RWPE1 (cell line): ENCODE measurements at regions of chr6 and their contacts with region 1.

Region 1: GRCh38 chr6:106085984-106086813 is at the start of gene PRDM1:
- DNase-seq: peak; percentile 85
- H3K27ac ChIP-seq: peak within 1 kb of the TSS; percentile 51
- CTCF ChIP-seq: peak; percentile 54; the same call in 1 of the 2 replicates

Region 2: GRCh38 chr6:104813552-104813951 is 1272.6 kb before region 1 on chr6:
- CTCF ChIA-PET with region 1: no interaction called
- POLR2A ChIA-PET with region 1: no interaction called
- DNase-seq: no peak
- H3K27ac ChIP-seq: no peak overlapping the region
- CTCF ChIP-seq: no peak

Region 3: DNA sequence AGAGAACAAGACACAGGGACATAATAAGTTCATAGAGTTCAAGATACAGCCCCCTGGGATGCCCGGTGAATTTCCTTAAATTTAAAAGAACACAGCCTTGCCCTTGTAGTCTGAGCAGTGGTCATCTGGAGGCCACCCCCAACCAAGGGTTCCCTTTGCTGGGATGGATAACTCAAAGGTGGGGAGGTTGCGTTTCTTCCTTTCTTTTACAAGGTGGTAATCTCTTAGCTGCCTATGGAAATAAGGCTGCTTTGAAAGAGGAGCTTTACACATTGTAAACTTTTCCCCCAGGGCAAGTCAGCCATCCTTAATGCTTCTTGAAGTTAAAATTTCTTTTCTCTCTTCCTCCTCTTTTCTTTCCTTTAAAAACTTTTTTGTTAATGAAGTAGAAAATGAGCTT is 71.3 kb before region 1 on chr6:
- CTCF ChIA-PET with region 1: no interaction called
- POLR2A ChIA-PET with region 1: interaction called, 10 read pairs
- DNase-seq: no peak
- H3K27ac ChIP-seq: no peak overlapping the region
- CTCF ChIP-seq: no peak

Region 4: DNA sequence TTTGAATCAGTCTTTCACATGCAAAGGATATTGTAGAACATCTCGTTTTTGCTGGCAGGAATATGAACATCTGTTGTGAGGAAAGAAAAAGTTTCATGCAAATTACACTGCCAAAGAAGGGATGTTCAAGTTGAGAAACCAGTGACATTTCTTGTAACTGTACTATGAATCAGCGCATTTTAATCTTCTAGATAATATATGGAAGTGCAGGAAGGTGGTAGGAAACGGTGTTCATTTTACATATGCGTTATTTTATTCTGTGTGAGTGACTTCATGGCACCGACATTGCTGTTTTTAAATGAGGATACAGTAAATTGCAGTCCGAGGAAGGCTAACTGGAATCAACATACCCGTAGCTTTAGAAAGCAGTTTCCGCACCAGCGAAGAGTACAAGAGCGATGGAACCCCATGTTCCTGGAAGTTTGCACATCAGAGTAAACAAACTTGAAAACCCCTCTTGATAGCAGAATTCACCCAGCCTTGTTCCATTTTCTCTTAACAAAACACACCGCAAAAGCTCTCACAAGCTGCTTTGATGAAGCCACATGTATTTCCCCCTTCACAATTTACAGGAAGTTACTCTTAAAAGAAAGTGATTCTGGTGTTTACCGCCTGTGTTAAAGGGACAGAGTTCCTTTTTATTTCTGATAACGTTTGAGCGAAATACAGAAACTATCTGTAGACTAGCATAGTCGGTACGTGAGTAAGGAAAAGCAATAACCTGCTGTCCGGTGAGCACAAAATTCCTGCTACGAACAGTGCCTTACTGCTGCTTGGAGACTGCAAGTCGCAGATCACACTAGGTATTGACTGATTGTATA is 11.4 kb after region 1 on chr6:
- CTCF ChIA-PET with region 1: no interaction called
- POLR2A ChIA-PET with region 1: no interaction called
- DNase-seq: no peak
- H3K27ac ChIP-seq: no peak overlapping the region
- CTCF ChIP-seq: no peak